Mammary epithelial cell (primary cell): ENCODE measurements at regions of chr5 and their contacts with region 1.

Region 1: GRCh38 chr5:154647114-154647760 is 107.9 kb upstream of the LARP1 start:
- DNase-seq: peak; percentile 17
- H3K4me3 ChIP-seq: no peak overlapping the region
- H3K27ac ChIP-seq: no peak overlapping the region
- H3K4me1 ChIP-seq: peaks cover 6% of the 10 kb centered on the region
- H3K27me3 ChIP-seq: peaks cover 2% of the 10 kb centered on the region
- CTCF ChIP-seq: no peak

Region 2: DNA sequence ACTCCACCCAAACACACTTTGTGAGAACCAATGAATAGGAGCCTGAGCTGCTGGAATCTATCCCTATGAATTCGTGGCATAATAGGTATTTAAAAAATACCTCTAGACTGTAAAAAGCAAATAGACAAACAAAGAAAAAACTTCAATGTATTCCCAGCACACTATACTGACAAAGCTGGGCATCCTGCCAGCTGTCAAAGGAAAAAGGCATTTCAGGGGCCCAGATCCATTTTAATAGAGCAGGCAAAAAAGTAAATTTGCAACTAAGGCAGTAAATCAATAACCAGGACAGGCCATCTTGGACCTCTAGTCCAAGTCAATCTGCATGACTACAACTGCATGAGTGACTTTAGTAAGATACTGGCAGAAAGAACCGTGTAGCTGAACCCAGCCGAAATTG is 82.4 kb after region 1 on chr5:
- CTCF ChIA-PET with region 1: no interaction called
- dilution Hi-C with region 1: loop called (anchors 10 kb)
- in situ Hi-C with region 1: no loop called
- intact Hi-C with region 1: no loop called
- DNase-seq: no peak
- H3K4me3 ChIP-seq: no peak overlapping the region
- H3K27ac ChIP-seq: no peak overlapping the region
- H3K4me1 ChIP-seq: no peaks in the 10 kb centered on the region
- H3K27me3 ChIP-seq: no peaks in the 10 kb centered on the region
- CTCF ChIP-seq: no peak

Region 3: GRCh38 chr5:154811653-154812365 is 164.6 kb after region 1 on chr5:
- CTCF ChIA-PET with region 1: no interaction called
- dilution Hi-C with region 1: no loop called
- in situ Hi-C with region 1: loop called in 1 of 2 experiments (anchors 10 kb)
- intact Hi-C with region 1: loop called (anchors 1 kb)
- DNase-seq: peak; percentile 38
- H3K4me3 ChIP-seq: no peak overlapping the region
- H3K27ac ChIP-seq: no peak overlapping the region
- H3K4me1 ChIP-seq: no peaks in the 10 kb centered on the region
- H3K27me3 ChIP-seq: no peaks in the 10 kb centered on the region
- CTCF ChIP-seq: peak; percentile 85 to 98

Region 4: GRCh38 chr5:154857530-154858296 is 210.5 kb after region 1 on chr5:
- CTCF ChIA-PET with region 1: no interaction called
- dilution Hi-C with region 1: no loop called
- in situ Hi-C with region 1: no loop called
- intact Hi-C with region 1: loop called (anchors 2 kb)
- DNase-seq: peak; percentile 93
- H3K4me3 ChIP-seq: peak overlapping the region; percentile 68 to 88 (median 86)
- H3K27ac ChIP-seq: peak overlapping the region; percentile 92
- H3K4me1 ChIP-seq: peaks cover 17% of the 10 kb centered on the region
- H3K27me3 ChIP-seq: no peaks in the 10 kb centered on the region
- CTCF ChIP-seq: no peak

Region 5: GRCh38 chr5:154940772-154941620 is 293.8 kb after region 1 on chr5 and contains the start of gene MRPL22:
- CTCF ChIA-PET with region 1: no interaction called
- dilution Hi-C with region 1: no loop called
- in situ Hi-C with region 1: no loop called
- intact Hi-C with region 1: loop called (anchors 1 kb)
- DNase-seq: peak; percentile 91
- H3K4me3 ChIP-seq: peak within 1 kb of the TSS; percentile 66 to 94 (median 84)
- H3K27ac ChIP-seq: peak within 1 kb of the TSS; percentile 81
- H3K4me1 ChIP-seq: peaks cover 22% of the 10 kb centered on the region
- H3K27me3 ChIP-seq: no peaks in the 10 kb centered on the region
- CTCF ChIP-seq: no peak
- total RNA-seq, gene MRPL22: 7.7 to 58.1 TPM

Region 6: GRCh38 chr5:155027993-155028629 is 380.9 kb after region 1 on chr5:
- CTCF ChIA-PET with region 1: no interaction called
- dilution Hi-C with region 1: no loop called
- in situ Hi-C with region 1: loop called in 1 of 2 experiments (anchors 25 kb)
- intact Hi-C with region 1: loop called (anchors 5 kb)
- DNase-seq: peak; percentile 20
- H3K4me3 ChIP-seq: no peak overlapping the region
- H3K27ac ChIP-seq: no peak overlapping the region
- H3K4me1 ChIP-seq: no peaks in the 10 kb centered on the region
- H3K27me3 ChIP-seq: no peaks in the 10 kb centered on the region
- CTCF ChIP-seq: peak; percentile 40 to 56